Breast epithelium (tissue), 4 donors: ENCODE measurements at regions of chr5 and their contacts with region 1.

Region 1: DNA sequence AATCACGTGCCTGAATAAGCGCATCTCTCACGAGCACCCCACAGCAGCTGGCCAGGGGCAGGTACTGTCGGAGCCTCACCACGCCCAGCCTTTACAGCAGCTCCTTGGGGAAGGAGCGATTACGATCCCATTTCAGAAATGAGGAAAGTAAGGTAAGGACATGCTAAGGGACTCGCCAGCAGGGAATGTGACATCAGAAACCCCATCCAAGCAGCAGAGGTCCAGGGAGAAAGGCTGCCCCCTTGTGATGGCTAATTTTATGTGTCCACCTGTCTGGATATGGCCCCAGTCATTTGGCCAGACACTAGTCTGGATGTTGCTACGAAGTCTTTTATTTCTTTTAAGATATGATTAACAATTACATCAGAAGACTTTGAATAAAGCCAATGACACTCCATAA is 77.3 kb downstream of the UBE2QL1 start:
- DNase-seq: no peak
- H3K4me3 ChIP-seq: no peak overlapping the region
- H3K27ac ChIP-seq: no peak overlapping the region
- H3K4me1 ChIP-seq: no peaks in the 10 kb centered on the region
- H3K27me3 ChIP-seq: no peaks in the 10 kb centered on the region
- CTCF ChIP-seq: no peak
- POLR2A ChIP-seq: no peak

Region 2: DNA sequence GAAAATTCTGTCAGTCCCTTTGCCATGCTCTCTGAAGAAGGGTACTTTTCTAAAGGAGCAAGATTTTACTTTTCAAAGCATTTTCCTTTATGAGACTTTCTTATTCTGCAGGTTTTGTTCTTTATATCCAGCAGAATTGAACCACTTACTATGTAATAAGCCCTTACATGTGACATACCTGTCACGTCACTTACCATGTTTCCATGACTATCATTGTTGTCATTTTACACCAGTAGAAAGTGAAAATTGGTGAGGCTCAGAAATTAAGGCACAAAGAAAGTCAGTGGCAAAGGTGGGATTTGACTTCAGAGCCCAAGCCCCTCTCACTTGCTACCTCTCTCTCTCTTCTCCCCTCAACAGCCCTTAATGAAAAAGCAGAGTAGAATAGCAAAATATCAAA is 447.1 kb after region 1 on chr5:
- intact Hi-C with region 1: loop called (anchors 5 kb)
- DNase-seq: no peak
- H3K4me3 ChIP-seq: no peak overlapping the region
- H3K27ac ChIP-seq: no peak overlapping the region
- H3K4me1 ChIP-seq: no peaks in the 10 kb centered on the region
- H3K27me3 ChIP-seq: peaks cover 0 to 3% of the 10 kb centered on the region in 2 donors
- CTCF ChIP-seq: no peak
- POLR2A ChIP-seq: no peak